AG04450 (cell line): ENCODE measurements at regions of chr9 and their contacts with region 1.

Region 1: GRCh38 chr9:71819115-71819739 is 50.9 kb upstream of the CEMIP2 start:
- DNase-seq: no peak
- H3K4me3 ChIP-seq: no peak overlapping the region
- H3K27ac ChIP-seq: no peak overlapping the region
- H3K27me3 ChIP-seq: peaks cover 3% of the 10 kb centered on the region
- CTCF ChIP-seq: peak; percentile 78

Region 2: GRCh38 chr9:71604197-71605063 is 214.8 kb before region 1 on chr9:
- CTCF ChIA-PET with region 1: interaction called, 103 read pairs
- POLR2A ChIA-PET with region 1: no interaction called
- DNase-seq: peak; percentile 54
- H3K4me3 ChIP-seq: no peak overlapping the region
- H3K27ac ChIP-seq: no peak overlapping the region
- H3K27me3 ChIP-seq: no peaks in the 10 kb centered on the region
- CTCF ChIP-seq: peak; percentile 89

Region 3: GRCh38 chr9:71748280-71748743 is 70.9 kb before region 1 on chr9:
- CTCF ChIA-PET with region 1: no interaction called
- POLR2A ChIA-PET with region 1: no interaction called
- DNase-seq: no peak
- H3K4me3 ChIP-seq: no peak overlapping the region
- H3K27ac ChIP-seq: no peak overlapping the region
- H3K27me3 ChIP-seq: no peaks in the 10 kb centered on the region
- CTCF ChIP-seq: no peak

Region 4: GRCh38 chr9:71795097-71795813 is 24.0 kb before region 1 on chr9:
- CTCF ChIA-PET with region 1: interaction called, 10 read pairs
- POLR2A ChIA-PET with region 1: no interaction called
- DNase-seq: no peak
- H3K4me3 ChIP-seq: no peak overlapping the region
- H3K27ac ChIP-seq: no peak overlapping the region
- H3K27me3 ChIP-seq: no peaks in the 10 kb centered on the region
- CTCF ChIP-seq: no peak

Region 5: DNA sequence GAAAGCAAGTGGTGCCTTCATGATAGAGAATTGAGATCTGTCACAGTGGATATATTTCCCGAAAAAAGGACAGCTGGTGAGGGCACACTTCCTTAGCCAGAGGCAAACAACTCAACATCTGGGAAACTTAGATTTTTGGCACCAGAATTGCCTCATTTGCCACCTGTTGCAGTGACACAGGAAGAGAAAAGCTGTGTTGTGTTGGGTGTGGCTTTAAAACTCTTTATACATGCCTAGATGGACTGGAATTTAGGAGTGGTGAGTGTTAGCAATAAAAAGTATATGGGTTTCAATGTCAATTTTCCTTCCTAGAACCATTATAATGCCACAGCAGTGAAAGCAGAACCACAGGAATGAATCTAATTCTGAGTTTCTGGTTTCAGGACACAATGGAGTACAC is 11.7 kb after region 1 on chr9:
- CTCF ChIA-PET with region 1: interaction called, 12 read pairs
- POLR2A ChIA-PET with region 1: no interaction called
- DNase-seq: no peak
- H3K4me3 ChIP-seq: no peak overlapping the region
- H3K27ac ChIP-seq: no peak overlapping the region
- H3K27me3 ChIP-seq: peaks cover 7% of the 10 kb centered on the region
- CTCF ChIP-seq: no peak

Region 6: DNA sequence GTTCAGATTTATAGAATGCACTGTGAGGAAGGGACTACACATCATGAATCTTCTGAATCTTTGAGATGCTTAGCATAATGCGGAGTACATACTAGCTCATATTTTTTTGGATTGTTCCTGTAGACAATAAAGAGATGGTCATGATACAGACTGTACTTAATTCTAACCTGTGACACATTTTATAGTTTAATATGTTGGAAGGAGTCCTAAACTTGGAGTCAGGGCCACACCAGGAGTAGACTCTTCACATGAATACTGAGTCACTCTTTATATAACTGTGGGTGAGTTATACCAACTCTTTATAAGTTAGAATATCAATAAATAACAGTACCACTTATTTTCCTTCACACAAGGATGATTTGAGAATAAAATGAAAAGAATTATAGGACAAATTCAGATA is 109.1 kb after region 1 on chr9:
- CTCF ChIA-PET with region 1: interaction called, 10 read pairs
- POLR2A ChIA-PET with region 1: no interaction called
- DNase-seq: no peak
- H3K4me3 ChIP-seq: no peak overlapping the region
- H3K27ac ChIP-seq: no peak overlapping the region
- H3K27me3 ChIP-seq: no peaks in the 10 kb centered on the region
- CTCF ChIP-seq: no peak

Region 7: DNA sequence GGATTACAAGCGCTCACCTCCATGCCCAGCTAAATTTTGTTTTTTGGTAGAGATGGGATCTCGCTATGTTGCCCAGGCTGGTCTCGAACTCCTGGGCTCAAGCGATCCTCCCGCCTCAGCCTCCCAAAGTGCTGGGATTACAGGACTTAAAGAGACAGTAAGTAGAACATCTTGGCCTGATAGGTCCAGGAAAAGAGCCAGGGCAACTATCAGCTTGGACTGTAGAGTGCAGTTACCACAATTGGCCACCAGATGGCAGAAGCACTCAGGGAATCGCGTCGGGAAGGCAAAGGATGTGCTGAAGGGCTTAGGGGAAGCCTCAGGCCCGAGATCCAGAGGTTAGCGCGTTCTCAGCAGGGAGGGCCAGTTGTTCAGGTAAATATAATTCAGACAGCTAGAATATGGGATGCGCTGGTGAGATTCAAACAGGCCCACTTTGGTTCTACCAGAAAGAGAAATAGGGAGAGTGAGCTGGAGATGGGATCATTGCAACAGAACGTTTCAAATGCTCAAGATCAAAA is 219.7 kb after region 1 on chr9:
- CTCF ChIA-PET with region 1: interaction called, 12 read pairs
- POLR2A ChIA-PET with region 1: no interaction called
- DNase-seq: peak; percentile 61
- H3K4me3 ChIP-seq: no peak overlapping the region
- H3K27ac ChIP-seq: no peak overlapping the region
- H3K27me3 ChIP-seq: peaks cover 6% of the 10 kb centered on the region
- CTCF ChIP-seq: peak; percentile 96